Lower lobe of right lung (tissue), 2 donors: ENCODE measurements at regions of chr15 and their contacts with region 1.

Region 1: GRCh38 chr15:63752075-63752684 is 81.6 kb downstream of the HERC1 start:
- DNase-seq: no peak
- ATAC-seq: peak; percentile 84 to 85
- H3K4me3 ChIP-seq: no peak overlapping the region
- H3K27ac ChIP-seq: no peak overlapping the region
- H3K4me1 ChIP-seq: no peaks in the 10 kb centered on the region
- H3K27me3 ChIP-seq: no peaks in the 10 kb centered on the region
- CTCF ChIP-seq: peak; percentile 72

Region 2: GRCh38 chr15:63805993-63806980 is 54.1 kb after region 1 on chr15:
- intact Hi-C with region 1: no loop called
- DNase-seq: no peak
- ATAC-seq: no peak
- H3K4me3 ChIP-seq: no peak overlapping the region
- H3K27ac ChIP-seq: no peak overlapping the region
- H3K4me1 ChIP-seq: peaks cover 50% of the 10 kb centered on the region
- H3K27me3 ChIP-seq: no peaks in the 10 kb centered on the region
- CTCF ChIP-seq: no peak

Region 3: GRCh38 chr15:64070965-64071851 is 319.0 kb after region 1 on chr15:
- intact Hi-C with region 1: loop called (anchors 10 kb)
- DNase-seq: no peak
- ATAC-seq: peak; percentile 60 to 66
- H3K4me3 ChIP-seq: no peak overlapping the region
- H3K27ac ChIP-seq: peak overlapping the region; percentile 48
- H3K4me1 ChIP-seq: peaks cover 52% of the 10 kb centered on the region
- H3K27me3 ChIP-seq: no peaks in the 10 kb centered on the region
- CTCF ChIP-seq: no peak